PC-9 (cell line): ENCODE measurements at regions of chr9 and their contacts with region 1.

Region 1: DNA sequence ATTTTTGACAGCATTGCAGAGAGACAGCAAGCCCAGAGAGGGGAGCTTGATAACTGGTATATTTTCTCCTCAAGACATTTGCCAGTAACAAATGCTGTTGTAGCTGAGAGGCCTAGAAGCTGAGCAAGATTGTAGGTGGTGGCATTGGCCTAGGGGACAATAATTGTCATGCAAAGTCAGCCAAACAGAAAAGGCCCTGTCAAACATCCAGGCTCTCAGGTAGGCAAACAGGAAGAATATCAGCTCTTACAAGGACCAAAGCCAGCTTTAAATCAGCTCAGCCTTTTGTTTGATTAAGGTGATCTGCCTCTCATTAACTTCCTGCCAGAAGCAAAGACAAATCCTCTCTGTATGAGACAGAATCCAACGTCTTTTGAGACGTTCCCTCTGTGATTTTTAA is 29.7 kb upstream of the BARX1 start:
- DNase-seq: no peak
- H3K4me3 ChIP-seq: no peak overlapping the region
- H3K27ac ChIP-seq: no peak overlapping the region
- H3K4me1 ChIP-seq: no peaks in the 10 kb centered on the region
- H3K27me3 ChIP-seq: peaks cover 6% of the 10 kb centered on the region
- CTCF ChIP-seq: no peak

Region 2: DNA sequence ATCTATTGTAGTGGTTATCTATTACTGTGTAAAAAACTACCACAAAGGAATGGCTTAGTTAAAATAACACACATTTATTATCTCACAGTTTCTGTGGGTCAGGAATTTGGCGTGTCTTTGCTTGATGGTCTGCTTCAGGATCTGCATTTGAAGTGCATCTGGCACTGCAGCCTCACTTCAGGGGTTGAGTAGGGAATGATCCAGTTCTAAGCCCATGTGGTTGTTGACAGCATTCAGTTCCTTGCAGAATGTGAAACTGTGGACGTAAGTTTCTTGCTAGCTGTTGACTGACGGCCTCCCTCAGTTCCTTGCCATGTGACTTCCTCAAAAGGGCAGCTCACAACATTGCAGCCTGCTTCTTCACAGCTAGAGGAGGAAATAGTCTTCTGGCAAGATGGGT is 1578.4 kb before region 1 on chr9:
- CTCF ChIA-PET with region 1: no interaction called
- POLR2A ChIA-PET with region 1: no interaction called
- intact Hi-C with region 1: no loop called
- DNase-seq: no peak
- H3K4me3 ChIP-seq: no peak overlapping the region
- H3K27ac ChIP-seq: no peak overlapping the region
- H3K4me1 ChIP-seq: no peaks in the 10 kb centered on the region
- H3K27me3 ChIP-seq: no peaks in the 10 kb centered on the region
- CTCF ChIP-seq: no peak

Region 3: GRCh38 chr9:92468206-92468605 is 1516.7 kb before region 1 on chr9:
- CTCF ChIA-PET with region 1: no interaction called
- POLR2A ChIA-PET with region 1: no interaction called
- intact Hi-C with region 1: no loop called
- DNase-seq: no peak
- H3K4me3 ChIP-seq: no peak overlapping the region
- H3K27ac ChIP-seq: no peak overlapping the region
- H3K4me1 ChIP-seq: no peaks in the 10 kb centered on the region
- H3K27me3 ChIP-seq: no peaks in the 10 kb centered on the region
- CTCF ChIP-seq: no peak

Region 4: DNA sequence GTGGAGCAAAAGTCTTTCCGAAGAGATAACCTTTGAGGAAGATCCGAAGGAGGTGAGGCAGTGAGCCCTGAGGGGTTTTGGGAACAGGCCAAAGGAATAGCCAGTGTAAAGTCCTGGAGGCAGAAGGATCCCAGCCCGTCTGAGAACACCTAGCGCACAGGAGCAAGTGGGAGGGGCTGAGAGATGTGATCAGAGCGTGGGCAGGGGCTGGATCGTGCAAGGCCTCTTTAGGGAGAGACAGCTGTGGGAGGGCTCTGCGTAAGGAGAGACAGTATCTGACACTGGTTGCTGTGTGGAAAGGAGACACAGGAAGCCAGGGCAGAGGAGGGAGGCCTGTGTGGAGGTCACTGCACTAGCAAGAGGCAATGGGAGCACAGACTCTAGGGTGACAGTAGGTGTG is 97.9 kb before region 1 on chr9:
- CTCF ChIA-PET with region 1: interaction called, 11 read pairs
- POLR2A ChIA-PET with region 1: no interaction called
- intact Hi-C with region 1: no loop called
- DNase-seq: no peak
- H3K4me3 ChIP-seq: no peak overlapping the region
- H3K27ac ChIP-seq: no peak overlapping the region
- H3K4me1 ChIP-seq: no peaks in the 10 kb centered on the region
- H3K27me3 ChIP-seq: peaks cover 44% of the 10 kb centered on the region
- CTCF ChIP-seq: no peak